ENCODE measurements at regions of chr4 and their contacts with region 1.

Region 1: DNA sequence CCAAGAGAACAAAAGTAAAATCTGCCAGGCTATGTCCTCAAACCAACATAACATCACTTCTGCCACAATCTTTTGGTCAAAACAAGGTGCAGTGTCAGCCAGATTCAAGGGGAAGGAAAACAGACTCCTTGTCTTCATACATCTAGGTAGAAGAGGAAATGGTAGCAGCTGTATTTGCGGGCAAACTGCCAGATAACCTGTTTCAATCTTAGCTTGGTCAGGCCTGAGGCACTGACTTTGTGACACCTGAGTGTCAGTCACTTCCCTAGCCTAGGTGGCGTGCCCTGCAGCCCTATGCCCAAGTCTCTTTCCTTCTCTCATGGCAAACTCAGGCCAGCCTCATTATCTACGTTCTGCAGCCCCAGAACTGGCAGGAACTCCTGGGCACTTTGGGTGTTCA is 146.2 kb upstream of the JADE1 start:
- DNase-seq: peak; percentile 16
- H3K4me3 ChIP-seq: no peak overlapping the region
- H3K27ac ChIP-seq: peak overlapping the region; percentile 90 to 92
- H3K4me1 ChIP-seq: peaks cover 16% of the 10 kb centered on the region
- H3K27me3 ChIP-seq: no peaks in the 10 kb centered on the region
- CTCF ChIP-seq: no peak
- POLR2A ChIP-seq: no peak

Region 2: DNA sequence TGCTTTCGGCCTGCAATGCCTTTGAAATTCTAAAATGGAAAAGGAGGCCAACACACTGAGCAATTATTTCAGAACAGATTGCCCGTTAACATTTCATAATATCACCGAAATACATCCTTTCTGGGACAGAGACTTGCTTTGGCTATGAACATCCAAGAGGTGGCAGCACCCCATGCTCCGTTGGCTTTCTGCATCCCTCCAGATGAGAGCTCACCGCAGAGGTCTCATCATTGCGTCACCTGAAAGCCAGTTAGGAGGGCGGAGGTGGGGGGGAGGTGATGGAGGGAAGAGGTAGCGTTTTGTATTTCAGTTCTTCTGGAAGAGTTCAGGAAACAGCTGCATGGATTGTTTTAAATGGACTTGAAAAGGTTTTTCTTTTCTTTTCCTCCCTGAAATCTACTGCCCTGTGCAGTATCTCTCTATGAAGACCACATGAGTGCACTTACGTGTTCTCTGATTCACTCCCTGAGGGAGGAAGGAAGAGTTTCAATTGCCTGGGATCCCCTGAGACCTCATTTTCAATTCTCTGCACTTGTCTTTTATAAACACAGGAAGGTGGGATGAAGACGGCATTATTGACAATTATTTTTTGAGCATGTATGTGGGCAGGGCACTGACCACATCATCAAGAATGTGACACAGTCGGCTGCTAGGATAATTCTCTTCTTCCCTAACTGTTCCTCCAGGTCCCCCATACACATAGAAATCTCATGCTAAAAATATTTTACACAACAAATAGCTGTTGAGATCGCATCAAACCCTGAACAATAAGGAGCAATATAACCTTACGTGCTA is 208.9 kb before region 1 on chr4:
- intact Hi-C with region 1: loop called (anchors 5 kb)
- DNase-seq: peak; percentile 78
- H3K4me3 ChIP-seq: no peak overlapping the region
- H3K27ac ChIP-seq: no peak overlapping the region
- H3K4me1 ChIP-seq: no peaks in the 10 kb centered on the region
- H3K27me3 ChIP-seq: no peaks in the 10 kb centered on the region
- CTCF ChIP-seq: peak; percentile 35 to 84 (median 71)
- POLR2A ChIP-seq: no peak

Region 3: DNA sequence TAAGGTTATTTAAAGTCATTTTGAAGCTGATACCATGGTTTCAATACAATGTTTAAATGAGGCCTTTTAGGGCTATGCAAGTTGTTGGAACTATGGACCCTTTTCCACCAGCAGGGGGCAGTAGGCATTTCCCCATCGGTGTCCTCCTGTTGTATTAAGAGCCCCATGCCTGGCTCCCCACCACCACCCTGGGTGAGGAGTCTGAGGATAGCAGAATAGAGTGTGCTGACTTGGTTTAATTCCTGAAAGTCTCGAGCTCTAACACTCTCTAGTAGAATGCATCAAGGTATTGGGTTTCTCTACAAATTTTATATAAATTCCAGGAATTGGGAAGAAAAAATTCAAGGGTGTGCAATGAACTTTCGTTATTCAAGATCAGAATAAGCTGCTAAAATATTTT is 88.6 kb before region 1 on chr4:
- intact Hi-C with region 1: loop called (anchors 5 kb)
- DNase-seq: peak; percentile 82
- H3K4me3 ChIP-seq: no peak overlapping the region
- H3K27ac ChIP-seq: no peak overlapping the region
- H3K4me1 ChIP-seq: no peaks in the 10 kb centered on the region
- H3K27me3 ChIP-seq: no peaks in the 10 kb centered on the region
- CTCF ChIP-seq: peak; percentile 35 to 80 (median 63)
- POLR2A ChIP-seq: no peak

Region 4: GRCh38 chr4:128718768-128719167 is 55.4 kb after region 1 on chr4:
- intact Hi-C with region 1: loop called (anchors 5 kb)
- DNase-seq: no peak
- H3K4me3 ChIP-seq: no peak overlapping the region
- H3K27ac ChIP-seq: no peak overlapping the region
- H3K4me1 ChIP-seq: no peaks in the 10 kb centered on the region
- H3K27me3 ChIP-seq: no peaks in the 10 kb centered on the region
- CTCF ChIP-seq: no peak
- POLR2A ChIP-seq: no peak